ENCODE measurements at regions of chr3 and their contacts with region 1.

Region 1: DNA sequence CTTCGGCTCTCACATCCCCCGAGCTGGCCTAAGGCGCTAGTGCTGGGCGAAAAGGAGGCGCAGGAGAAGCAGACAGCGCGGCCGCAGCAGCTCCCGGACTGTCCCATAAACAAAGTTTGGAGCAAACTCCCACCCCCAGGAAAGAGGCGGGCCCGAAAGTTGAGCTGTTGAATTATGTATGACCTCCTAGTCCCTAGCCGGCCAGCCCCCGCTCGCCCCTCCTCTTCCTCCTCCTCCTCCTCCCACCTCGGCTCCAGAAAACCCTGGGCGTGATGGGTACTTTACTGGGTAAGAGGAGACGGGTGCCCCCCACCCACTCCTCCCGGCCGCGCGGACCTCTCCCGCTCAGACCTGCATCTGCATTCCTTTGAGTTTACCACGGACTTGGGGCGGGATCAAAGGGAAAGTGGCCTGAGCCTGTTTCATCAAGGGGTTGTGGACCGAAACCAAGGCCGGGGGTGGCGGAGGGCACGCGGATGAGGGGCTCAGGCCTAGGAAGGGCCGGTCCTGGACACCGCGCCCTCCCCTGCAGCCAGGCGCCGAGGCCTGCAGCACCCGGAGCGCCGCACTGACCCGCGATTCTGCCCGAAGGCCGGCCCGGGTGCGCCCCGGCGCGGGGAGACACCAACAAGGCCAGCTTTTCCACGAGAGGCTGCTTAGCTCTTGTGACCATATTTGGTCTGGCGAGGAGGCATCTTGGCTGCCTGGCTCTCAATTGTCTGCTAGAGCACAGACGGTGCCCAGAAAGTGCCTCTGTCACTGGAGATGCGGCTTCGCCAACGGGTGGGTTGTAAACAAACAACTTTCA is at the start of gene WWTR1:
- DNase-seq: peak; percentile 80

Region 2: DNA sequence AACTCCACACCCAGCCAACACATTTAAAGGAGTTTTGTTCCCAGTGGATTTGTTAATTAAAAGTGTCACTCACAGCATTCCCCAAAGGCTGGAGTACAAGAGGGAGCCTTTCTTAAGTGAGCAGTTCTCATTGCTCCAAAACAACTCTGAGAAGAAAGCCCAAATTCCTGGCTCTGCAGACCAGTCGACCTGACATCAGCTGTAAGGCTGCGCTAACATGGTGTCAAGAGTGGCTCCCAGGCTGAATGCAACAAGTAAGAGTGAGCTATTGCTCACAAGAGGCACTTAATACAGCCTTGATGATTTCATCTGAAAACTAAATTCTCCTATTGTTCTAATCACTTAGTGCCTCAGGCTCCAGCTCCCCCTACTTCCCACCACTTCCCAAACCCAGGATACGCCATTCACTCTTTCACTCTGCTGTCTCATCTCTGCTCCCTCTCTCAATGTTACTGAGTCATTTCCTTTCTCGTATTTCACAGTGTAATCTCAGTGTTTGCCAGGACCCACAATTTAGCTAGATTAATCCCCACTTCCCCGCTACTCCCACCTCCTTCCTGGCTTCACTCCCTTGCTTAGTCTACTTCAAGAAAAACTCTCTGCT is 82.1 kb before region 1 on chr3:
- CTCF ChIA-PET with region 1: no interaction called
- POLR2A ChIA-PET with region 1: interaction called, 10 read pairs
- DNase-seq: peak; percentile 11

Region 3: GRCh38 chr3:149678365-149678948 is 20.3 kb after region 1 on chr3:
- CTCF ChIA-PET with region 1: no interaction called
- POLR2A ChIA-PET with region 1: no interaction called
- DNase-seq: no peak

Measured in HEK293T (cell line).